Natural killer cell (primary cell): ENCODE measurements at regions of chr1 and their contacts with region 1.

Region 1: DNA sequence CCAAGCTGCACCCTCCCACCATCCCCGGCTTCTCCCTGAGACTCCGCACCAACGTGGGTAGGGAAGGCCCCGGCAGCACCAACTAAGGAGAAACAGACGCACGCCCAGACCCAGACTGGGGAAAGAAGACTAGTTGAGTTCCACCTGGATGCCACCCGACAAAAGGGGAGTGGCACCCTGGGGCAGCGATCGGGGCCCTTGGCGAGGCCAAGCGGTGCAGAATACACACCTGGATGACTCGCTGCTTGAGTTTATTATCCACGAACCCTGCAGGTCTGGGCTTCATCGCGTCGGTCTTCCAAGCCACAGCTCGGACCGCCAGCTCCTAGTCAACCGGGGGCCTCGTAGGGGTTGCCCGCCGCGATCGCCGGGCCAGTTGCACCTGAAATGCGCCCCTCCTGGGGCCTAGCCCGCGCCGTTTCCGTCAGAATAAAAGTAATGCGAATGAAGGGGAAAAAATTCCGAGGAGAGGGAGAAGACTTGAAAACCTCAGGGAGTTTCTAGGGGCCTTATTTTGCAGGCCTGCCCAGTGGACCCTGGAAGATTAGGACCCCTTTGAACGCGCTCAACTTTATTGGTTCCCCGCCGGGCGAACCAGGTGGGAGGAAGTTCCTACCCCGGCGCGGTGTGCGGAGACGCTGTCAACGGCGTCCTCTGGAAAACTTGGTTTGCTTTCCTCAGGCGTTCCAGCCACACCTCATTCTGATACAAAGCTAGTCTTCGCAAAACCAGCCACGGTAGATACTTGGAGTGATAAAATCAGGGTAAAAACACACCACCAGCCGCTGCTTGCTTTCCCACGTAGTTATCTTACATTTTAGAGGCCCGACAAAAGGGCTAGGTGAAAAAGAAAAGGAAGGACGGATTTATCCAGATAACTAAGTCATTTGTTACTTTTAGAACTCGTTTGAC is at the start of gene NVL:
- DNase-seq: peak; percentile 74 to 90
- ATAC-seq: peak; percentile 89 to 92 (median 90)
- H3K4me3 ChIP-seq: peak within 1 kb of the TSS; percentile 96
- H3K4me3 Mint-ChIP-seq: peak within 1 kb of the TSS; percentile 98
- H3K27ac ChIP-seq: peak within 1 kb of the TSS; percentile 93
- H3K27ac Mint-ChIP-seq: peak within 1 kb of the TSS; percentile 99
- H3K4me1 ChIP-seq: peaks cover 8% of the 10 kb centered on the region
- H3K4me1 Mint-ChIP-seq: peaks cover 50% of the 10 kb centered on the region in 2 donors
- H3K27me3 ChIP-seq: no peaks in the 10 kb centered on the region
- H3K27me3 Mint-ChIP-seq: no peaks in the 10 kb centered on the region
- CTCF ChIP-seq: no peak
- total RNA-seq, gene NVL: 28.1 to 39.5 (median 32.4) TPM

Region 2: DNA sequence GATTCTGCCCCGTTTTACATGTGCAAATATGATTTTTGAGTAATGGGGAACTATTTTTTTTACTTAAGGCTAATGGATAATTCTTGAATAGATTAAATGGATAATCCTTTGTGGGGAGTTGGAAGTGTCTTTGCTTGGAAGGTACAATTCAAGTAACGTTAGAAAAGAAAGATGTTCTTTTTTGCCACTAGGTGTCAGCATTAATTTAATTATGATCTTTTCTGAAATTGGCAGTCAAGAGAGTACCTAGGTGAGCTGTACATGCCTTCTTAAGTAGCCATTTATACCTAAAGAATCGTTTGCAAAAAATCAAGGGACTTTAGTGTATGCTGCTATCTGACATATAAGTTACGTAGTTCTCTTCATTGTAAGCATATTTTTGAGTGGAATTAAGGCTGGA is 214.0 kb before region 1 on chr1:
- intact Hi-C with region 1: loop called (anchors 1 kb)
- DNase-seq: peak in 1 of 2 donors; percentile 71
- ATAC-seq: peak in 2 of 3 donors; percentile 21 to 27
- H3K4me3 ChIP-seq: no peak overlapping the region
- H3K4me3 Mint-ChIP-seq: peak overlapping the region; percentile 73
- H3K27ac ChIP-seq: no peak overlapping the region
- H3K27ac Mint-ChIP-seq: peak overlapping the region; percentile 44 to 94
- H3K4me1 ChIP-seq: peaks cover 8% of the 10 kb centered on the region
- H3K4me1 Mint-ChIP-seq: peaks cover 29 to 38% of the 10 kb centered on the region in 2 donors
- H3K27me3 ChIP-seq: no peaks in the 10 kb centered on the region
- H3K27me3 Mint-ChIP-seq: peaks cover 0 to 3% of the 10 kb centered on the region in 2 donors
- CTCF ChIP-seq: peak; percentile 68

Region 3: GRCh38 chr1:224170365-224171112 is 159.6 kb before region 1 on chr1:
- intact Hi-C with region 1: loop called (anchors 1 kb)
- DNase-seq: peak in 1 of 2 donors; percentile 75
- ATAC-seq: peak; percentile 49 to 69 (median 53)
- H3K4me3 ChIP-seq: no peak overlapping the region
- H3K4me3 Mint-ChIP-seq: no peak overlapping the region
- H3K27ac ChIP-seq: no peak overlapping the region
- H3K27ac Mint-ChIP-seq: no peak overlapping the region
- H3K4me1 ChIP-seq: peaks cover 7% of the 10 kb centered on the region
- H3K4me1 Mint-ChIP-seq: peaks cover 8 to 11% of the 10 kb centered on the region in 2 donors
- H3K27me3 ChIP-seq: no peaks in the 10 kb centered on the region
- H3K27me3 Mint-ChIP-seq: peaks cover 5 to 11% of the 10 kb centered on the region in 2 donors
- CTCF ChIP-seq: no peak

Region 4: GRCh38 chr1:224182866-224183590 is 147.1 kb before region 1 on chr1 and contains the start of gene DEGS1:
- intact Hi-C with region 1: loop called (anchors 2 kb)
- DNase-seq: peak; percentile 80 to 89
- ATAC-seq: peak; percentile 80 to 93 (median 87)
- H3K4me3 ChIP-seq: peak within 1 kb of the TSS; percentile 92
- H3K4me3 Mint-ChIP-seq: peak within 1 kb of the TSS; percentile 86
- H3K27ac ChIP-seq: peak within 1 kb of the TSS; percentile 97
- H3K27ac Mint-ChIP-seq: peak within 1 kb of the TSS; percentile 84 to 90
- H3K4me1 ChIP-seq: peaks cover 38% of the 10 kb centered on the region
- H3K4me1 Mint-ChIP-seq: peaks cover 15 to 24% of the 10 kb centered on the region in 2 donors
- H3K27me3 ChIP-seq: no peaks in the 10 kb centered on the region
- H3K27me3 Mint-ChIP-seq: no peaks in the 10 kb centered on the region
- CTCF ChIP-seq: no peak
- total RNA-seq, gene DEGS1: 28.6 to 29.2 (median 28.6) TPM

Region 5: DNA sequence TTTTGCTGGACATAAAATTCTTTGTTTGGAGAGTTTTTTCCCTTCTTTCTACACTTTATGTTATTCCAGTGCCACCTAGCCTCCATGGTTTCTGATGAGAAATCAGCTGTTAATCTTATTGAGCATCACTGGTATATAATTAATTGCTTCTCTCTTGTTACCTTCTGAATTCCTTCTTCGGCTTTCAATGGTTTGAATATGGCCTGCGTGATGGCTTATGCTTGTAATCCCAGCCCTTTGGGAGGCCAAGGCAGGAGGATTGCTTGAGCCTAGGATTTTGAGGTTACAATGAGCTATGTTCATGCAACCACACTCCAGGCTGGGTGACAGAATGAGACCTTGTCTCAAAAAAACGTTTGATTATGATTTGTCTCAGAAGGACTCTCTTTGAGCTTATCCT is 13.6 kb after region 1 on chr1:
- intact Hi-C with region 1: no loop called
- DNase-seq: no peak
- ATAC-seq: no peak
- H3K4me3 ChIP-seq: no peak overlapping the region
- H3K4me3 Mint-ChIP-seq: no peak overlapping the region
- H3K27ac ChIP-seq: no peak overlapping the region
- H3K27ac Mint-ChIP-seq: no peak overlapping the region
- H3K4me1 ChIP-seq: peaks cover 6% of the 10 kb centered on the region
- H3K4me1 Mint-ChIP-seq: peaks cover 0 to 5% of the 10 kb centered on the region in 2 donors
- H3K27me3 ChIP-seq: peaks cover 4% of the 10 kb centered on the region
- H3K27me3 Mint-ChIP-seq: peaks cover 0 to 10% of the 10 kb centered on the region in 2 donors
- CTCF ChIP-seq: no peak

Region 6: GRCh38 chr1:224356685-224357625 is 26.9 kb after region 1 on chr1 and contains the start of gene CNIH4:
- intact Hi-C with region 1: loop called (anchors 1 kb)
- DNase-seq: peak; percentile 78 to 96
- ATAC-seq: peak; percentile 97 to 99 (median 98)
- H3K4me3 ChIP-seq: peak within 1 kb of the TSS; percentile 61
- H3K4me3 Mint-ChIP-seq: peak within 1 kb of the TSS; percentile 95
- H3K27ac ChIP-seq: peak within 1 kb of the TSS; percentile 51
- H3K27ac Mint-ChIP-seq: peak within 1 kb of the TSS; percentile 85 to 94
- H3K4me1 ChIP-seq: peaks cover 14% of the 10 kb centered on the region
- H3K4me1 Mint-ChIP-seq: peaks cover 39% of the 10 kb centered on the region in 2 donors
- H3K27me3 ChIP-seq: no peaks in the 10 kb centered on the region
- H3K27me3 Mint-ChIP-seq: no peaks in the 10 kb centered on the region
- CTCF ChIP-seq: no peak
- total RNA-seq, gene CNIH4: 20.4 to 32.4 (median 27.3) TPM

Region 7: DNA sequence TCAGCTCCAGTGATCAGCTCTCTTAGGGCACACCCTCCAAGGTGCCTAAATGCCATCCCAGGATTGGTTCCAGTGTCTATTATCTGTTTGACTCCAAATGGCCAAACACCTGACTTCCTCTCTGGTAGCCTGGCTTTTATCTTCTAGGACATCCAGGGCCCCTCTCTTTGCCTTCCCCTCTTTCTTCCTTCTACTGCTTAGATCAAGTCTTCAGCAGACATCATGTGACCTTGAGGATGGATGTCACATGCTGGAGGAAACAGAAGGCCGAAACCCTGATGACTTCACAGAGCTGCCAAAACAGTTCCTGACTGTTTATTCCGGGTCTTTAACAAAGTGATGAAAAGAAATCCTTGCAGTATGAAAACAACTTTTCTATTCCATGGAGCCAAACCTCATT is 128.9 kb after region 1 on chr1:
- intact Hi-C with region 1: loop called (anchors 2 kb)
- DNase-seq: no peak
- ATAC-seq: no peak
- H3K4me3 ChIP-seq: no peak overlapping the region
- H3K4me3 Mint-ChIP-seq: no peak overlapping the region
- H3K27ac ChIP-seq: no peak overlapping the region
- H3K27ac Mint-ChIP-seq: no peak overlapping the region
- H3K4me1 ChIP-seq: peaks cover 4% of the 10 kb centered on the region
- H3K4me1 Mint-ChIP-seq: peaks cover 11% of the 10 kb centered on the region in 2 donors
- H3K27me3 ChIP-seq: no peaks in the 10 kb centered on the region
- H3K27me3 Mint-ChIP-seq: no peaks in the 10 kb centered on the region
- CTCF ChIP-seq: no peak